Activated T-helper 1 cell treated with anti-CD3 and anti-CD28 coated beads, Interleukin-12 subunit alpha, Interleukin-12 subunit beta, Interleukin-2, Interleukin-4 antibody, amounts not matched to agents 30 ng/mL and 10 ng/mL and 1 ng/mL, durations not matched to agents 14 hours and 24 hours and 36 hours (primary cell): ENCODE measurements at regions of chr12 and their contacts with region 1.

Region 1: DNA sequence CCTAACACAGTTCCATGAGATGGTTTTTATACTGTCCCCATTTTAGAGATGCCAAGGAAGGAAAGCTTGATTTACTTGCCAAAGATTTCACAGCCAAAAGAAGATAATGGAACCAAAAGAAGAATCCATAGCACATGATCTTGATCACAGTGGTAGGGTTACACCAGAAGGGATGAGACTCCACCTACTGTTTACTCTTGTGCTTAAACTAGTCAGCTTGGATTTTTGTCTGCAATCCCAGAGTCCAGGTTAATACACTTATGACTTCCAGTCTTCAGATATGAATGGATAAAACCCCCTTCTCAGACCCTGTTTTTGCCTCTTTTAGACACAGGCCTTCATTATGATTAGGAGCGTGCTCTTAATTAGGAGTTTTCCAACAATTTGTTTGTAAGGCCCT is 454.2 kb downstream of the AEBP2 start:
- DNase-seq: no peak
- H3K4me3 Mint-ChIP-seq: no peak overlapping the region
- H3K27ac Mint-ChIP-seq: no peak overlapping the region
- H3K4me1 Mint-ChIP-seq: no peaks in the 10 kb centered on the region
- H3K27me3 Mint-ChIP-seq: no peaks in the 10 kb centered on the region

Region 2: GRCh38 chr12:18521284-18521860 is 1372.1 kb before region 1 on chr12:
- intact Hi-C with region 1: no loop called
- DNase-seq: no peak
- H3K4me3 Mint-ChIP-seq: no peak overlapping the region
- H3K27ac Mint-ChIP-seq: no peak overlapping the region
- H3K4me1 Mint-ChIP-seq: no peaks in the 10 kb centered on the region
- H3K27me3 Mint-ChIP-seq: no peaks in the 10 kb centered on the region

Region 3: DNA sequence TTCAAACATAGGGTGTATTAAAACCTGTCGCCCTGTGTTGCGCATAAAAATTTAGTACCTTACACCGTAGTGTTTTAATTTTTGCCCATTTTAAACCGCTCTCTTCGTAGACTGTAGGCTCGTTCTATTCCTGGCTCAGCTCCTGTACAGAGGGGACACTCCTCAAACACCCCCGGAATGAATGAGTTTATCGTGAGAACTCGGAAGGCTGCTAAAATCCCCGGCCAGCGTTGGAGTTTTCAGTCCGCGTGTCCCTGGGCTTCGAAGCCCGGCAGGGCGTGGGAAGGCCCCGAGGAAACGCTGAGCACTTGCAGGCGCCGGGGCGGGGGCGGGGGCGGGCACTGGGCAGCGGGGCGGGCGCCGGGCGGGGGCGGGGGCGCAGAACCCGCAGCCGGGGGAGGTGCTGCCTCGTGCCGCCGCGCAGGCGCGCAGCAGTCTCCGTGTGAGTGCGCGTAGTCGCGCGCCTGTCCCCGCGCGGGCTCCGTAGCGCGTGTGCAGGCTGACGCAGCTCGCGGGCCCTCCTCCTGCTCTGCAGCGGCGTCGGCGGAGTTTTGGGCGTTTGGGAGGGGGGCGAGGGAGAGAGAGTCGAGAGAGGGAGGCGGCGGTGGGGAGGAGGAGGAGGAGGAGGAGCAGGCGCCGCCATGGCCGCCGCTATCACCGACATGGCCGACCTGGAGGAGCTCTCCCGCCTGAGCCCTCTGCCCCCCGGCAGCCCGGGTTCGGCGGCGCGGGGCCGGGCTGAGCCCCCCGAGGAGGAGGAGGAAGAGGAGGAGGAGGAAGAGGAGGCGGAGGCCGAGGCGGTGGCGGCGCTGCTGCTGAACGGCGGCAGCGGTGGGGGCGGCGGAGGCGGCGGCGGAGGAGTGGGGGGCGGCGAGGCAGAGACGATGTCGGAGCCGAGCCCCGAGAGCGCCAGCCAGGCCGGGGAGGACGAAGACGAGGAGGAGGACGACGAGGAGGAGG is 454.2 kb before region 1 on chr12 and contains the start of gene AEBP2:
- intact Hi-C with region 1: loop called (anchors 10 kb)
- DNase-seq: peak; percentile 90
- H3K4me3 Mint-ChIP-seq: peak within 1 kb of the TSS; percentile 98
- H3K27ac Mint-ChIP-seq: peak within 1 kb of the TSS; percentile 99
- H3K4me1 Mint-ChIP-seq: peaks cover 57% of the 10 kb centered on the region
- H3K27me3 Mint-ChIP-seq: peaks cover 2% of the 10 kb centered on the region
- total RNA-seq, gene AEBP2: 53.9 and 58.1 TPM in 2 replicates

Region 4: DNA sequence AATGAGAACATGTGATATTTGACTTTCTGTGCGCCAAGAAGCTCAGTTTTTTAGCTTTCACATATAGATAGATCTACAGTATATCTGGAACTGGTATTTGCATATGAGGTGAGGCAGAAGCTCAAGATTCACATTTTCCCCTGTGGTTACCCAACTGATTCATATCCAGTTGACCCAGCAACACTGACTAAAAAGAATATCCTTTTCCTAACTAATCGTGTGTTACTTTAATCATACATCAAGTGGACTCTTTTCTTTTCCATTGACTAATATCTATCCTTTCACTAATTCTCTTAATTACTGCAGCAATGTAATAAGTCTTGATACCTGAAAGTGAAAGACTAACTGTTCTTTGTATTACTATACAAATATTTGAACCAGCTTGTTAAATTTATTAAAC is 218.2 kb before region 1 on chr12:
- intact Hi-C with region 1: loop called (anchors 1 kb)
- DNase-seq: no peak
- H3K4me3 Mint-ChIP-seq: no peak overlapping the region
- H3K27ac Mint-ChIP-seq: peak overlapping the region; percentile 45
- H3K4me1 Mint-ChIP-seq: peaks cover 41% of the 10 kb centered on the region
- H3K27me3 Mint-ChIP-seq: peaks cover 8% of the 10 kb centered on the region

Region 5: DNA sequence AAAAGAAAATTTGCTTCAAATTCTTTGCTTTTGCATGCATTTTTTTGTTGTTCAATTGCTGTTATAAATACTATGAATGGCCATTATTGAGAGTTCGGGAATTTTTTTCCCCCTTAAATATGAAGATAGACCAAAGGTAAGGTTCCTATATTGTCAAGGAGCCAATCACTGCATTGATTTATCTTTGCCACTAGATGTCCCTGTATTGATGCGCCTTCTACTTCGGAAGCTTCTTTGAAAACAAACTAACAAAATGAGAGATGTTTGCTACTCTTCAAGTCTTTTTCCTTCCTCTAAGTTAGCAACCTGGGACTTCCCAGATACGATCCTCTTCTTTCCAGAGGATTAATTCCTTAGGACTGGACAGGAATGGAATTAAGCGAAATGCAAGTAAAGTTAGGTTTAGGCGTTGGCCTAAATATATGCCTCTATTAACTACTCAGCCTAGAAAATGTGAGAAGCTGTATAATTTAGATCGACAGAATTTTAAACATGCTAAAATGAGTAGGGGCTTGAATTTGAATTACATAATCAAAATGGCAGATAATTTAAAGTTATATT is 136.1 kb before region 1 on chr12:
- intact Hi-C with region 1: loop called (anchors 5 kb)
- DNase-seq: no peak
- H3K4me3 Mint-ChIP-seq: no peak overlapping the region
- H3K27ac Mint-ChIP-seq: no peak overlapping the region
- H3K4me1 Mint-ChIP-seq: no peaks in the 10 kb centered on the region
- H3K27me3 Mint-ChIP-seq: no peaks in the 10 kb centered on the region